ENCODE measurements at regions of chr13 and their contacts with region 1.

Region 1: GRCh38 chr13:67238277-67238859 is 8.2 kb upstream of the PCDH9 start:
- DNase-seq: no peak
- ATAC-seq: no peak

Region 2: DNA sequence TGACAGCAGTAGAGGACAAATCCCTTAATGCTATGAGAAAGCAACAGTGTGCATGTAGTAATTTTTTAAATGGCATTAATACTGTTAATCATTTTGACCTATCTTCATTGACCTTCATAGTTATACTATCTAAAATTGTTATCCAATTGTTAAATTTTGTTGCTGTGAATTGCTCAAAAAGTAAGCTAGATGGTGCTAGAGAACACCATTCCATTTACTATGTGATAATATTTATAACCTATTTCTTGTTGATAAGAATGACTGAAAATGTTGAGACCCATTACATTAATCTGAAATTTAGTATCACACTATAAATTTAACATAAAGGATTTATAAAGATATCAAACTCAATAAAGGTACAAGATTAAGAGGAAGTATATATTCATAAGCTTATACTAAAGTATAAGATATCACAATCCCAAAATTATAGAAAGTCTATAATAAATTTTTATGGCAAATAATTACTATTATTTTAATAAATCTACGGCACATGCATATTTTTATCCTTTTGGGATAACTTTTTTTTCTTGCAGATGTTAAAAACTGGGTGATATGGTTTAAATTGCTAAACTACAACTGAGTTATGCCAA is 1581.5 kb before region 1 on chr13:
- intact Hi-C with region 1: loop called in 1 of 2 experiments (anchors 5 kb)
- DNase-seq: no peak
- ATAC-seq: no peak

Region 3: DNA sequence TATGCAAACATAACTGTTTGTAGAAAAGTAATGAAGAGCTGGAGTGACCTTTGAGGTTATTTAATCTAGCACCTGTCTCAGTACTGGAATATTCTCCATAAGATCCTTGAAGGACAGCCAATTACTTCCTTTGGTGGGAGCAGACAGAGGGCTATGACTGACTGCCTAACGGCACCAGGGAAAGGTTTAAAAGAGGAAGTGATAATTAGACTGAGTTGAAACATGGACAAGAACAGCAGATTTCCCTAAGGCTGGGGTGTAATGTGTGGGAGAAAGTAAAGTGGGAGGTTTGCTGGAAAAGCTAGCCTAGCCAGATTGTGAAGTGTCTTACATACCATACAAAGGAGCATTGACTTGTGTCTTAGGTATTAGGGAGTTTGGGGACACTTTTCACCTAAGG is 183.1 kb after region 1 on chr13:
- intact Hi-C with region 1: no loop called
- DNase-seq: no peak
- ATAC-seq: no peak

Region 4: GRCh38 chr13:67841071-67841470 is 602.7 kb after region 1 on chr13:
- intact Hi-C with region 1: no loop called
- DNase-seq: no peak
- ATAC-seq: no peak

Measured in left cardiac atrium (tissue), 4 donors.